ENCODE measurements at regions of chr2 and their contacts with region 1.

Region 1: GRCh38 chr2:177332041-177332991 is 60.3 kb upstream of the AGPS start:
- DNase-seq: no peak
- H3K4me3 ChIP-seq: no peak overlapping the region
- CTCF ChIP-seq: peak; percentile 50

Region 2: GRCh38 chr2:177106212-177106611 is 226.1 kb before region 1 on chr2:
- CTCF ChIA-PET with region 1: no interaction called
- POLR2A ChIA-PET with region 1: no interaction called
- DNase-seq: no peak
- H3K4me3 ChIP-seq: no peak overlapping the region
- CTCF ChIP-seq: no peak

Region 3: GRCh38 chr2:177263451-177264208 is 68.7 kb before region 1 on chr2:
- CTCF ChIA-PET with region 1: interaction called, 17 read pairs
- POLR2A ChIA-PET with region 1: interaction called, 3 read pairs
- DNase-seq: peak; percentile 89
- H3K4me3 ChIP-seq: peak overlapping the region; percentile 76
- CTCF ChIP-seq: peak; percentile 98

Region 4: DNA sequence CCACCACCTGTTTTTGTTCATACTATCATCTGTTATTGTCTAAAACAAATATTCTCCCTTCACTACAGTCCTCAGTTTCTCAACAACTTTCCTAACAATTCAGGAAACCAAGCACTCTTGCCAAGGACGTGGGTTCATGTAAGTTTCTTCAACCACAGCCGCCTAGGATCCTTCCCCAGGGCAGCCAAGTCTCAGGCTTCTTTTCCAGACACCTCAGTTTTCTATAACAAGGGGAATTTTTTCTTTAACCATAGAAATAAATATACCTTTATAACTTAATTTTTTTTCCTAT is 20.8 kb after region 1 on chr2:
- CTCF ChIA-PET with region 1: interaction called, 14 read pairs
- POLR2A ChIA-PET with region 1: interaction called, 4 read pairs
- DNase-seq: no peak
- H3K4me3 ChIP-seq: no peak overlapping the region
- CTCF ChIP-seq: no peak

Region 5: DNA sequence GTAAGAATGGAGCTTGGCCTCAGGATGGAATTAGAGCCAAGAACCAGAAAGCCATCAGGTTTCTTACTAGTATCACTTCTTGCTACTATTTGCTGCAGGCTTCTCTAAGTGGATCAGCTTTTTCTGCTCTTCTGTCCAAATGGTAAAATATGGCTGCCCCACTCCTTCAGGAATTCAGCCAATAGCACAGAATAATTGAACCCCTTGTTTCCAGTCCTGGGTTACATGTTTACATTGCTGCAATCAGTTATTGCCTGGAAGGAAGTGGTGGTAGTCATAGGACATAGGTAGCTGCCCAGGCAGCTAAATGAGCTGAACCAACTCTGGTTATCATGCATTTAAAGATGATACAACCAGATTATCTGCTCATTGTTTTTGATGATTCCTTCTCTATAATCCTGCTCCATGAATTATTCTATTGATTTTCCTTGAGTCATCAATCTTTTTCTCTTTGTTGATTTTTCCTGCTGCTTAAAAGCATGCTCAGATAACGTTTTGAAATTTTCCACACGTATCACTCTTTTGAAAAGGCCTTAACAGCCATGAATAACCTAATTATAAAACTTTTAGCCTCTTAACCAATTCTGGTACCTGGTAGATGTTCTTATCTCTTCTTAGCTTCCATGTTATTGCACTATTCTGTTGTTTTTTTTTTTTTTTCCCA is 72.8 kb after region 1 on chr2:
- CTCF ChIA-PET with region 1: interaction called, 21 read pairs
- POLR2A ChIA-PET with region 1: no interaction called
- DNase-seq: no peak
- H3K4me3 ChIP-seq: no peak overlapping the region
- CTCF ChIP-seq: no peak

Region 6: GRCh38 chr2:177604271-177605065 is 272.2 kb after region 1 on chr2:
- CTCF ChIA-PET with region 1: interaction called, 28 read pairs
- POLR2A ChIA-PET with region 1: no interaction called
- DNase-seq: peak; percentile 38
- H3K4me3 ChIP-seq: peak overlapping the region; percentile 25
- CTCF ChIP-seq: peak; percentile 74

Region 7: DNA sequence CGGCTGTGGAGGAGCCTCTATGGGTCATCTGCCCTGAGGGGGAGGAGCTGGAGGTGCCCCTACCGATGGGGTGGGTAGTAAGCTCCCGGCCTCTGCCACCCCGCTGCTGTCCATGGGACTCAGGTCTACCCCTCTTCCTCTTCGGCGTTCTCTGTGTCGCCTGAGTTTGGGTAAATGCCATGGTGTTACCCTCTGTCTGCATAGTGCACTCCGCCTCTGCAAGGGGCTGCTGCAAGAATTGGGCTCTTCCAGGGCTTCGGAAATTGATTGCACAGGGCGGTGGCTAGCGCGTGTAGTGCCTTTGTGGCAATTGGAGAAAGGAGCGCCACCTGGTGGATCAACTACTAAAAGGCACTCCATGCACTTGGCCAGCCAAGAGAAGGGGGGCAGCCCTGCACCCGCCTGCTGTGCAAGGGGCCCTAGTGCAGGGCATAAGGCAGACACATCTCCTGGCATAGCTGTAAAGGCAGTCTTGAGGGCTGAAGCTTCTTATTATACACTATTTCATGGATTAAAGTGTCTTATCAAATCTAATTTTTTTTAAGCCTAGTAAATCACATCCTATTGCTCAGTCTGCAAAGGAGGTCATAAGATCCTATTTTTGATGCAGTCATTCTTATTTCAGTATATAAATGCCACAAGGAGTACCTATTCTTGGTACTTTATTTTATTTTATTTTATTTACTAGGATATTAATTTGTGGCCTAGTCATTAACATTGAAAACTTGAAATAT is 431.4 kb after region 1 on chr2:
- CTCF ChIA-PET with region 1: interaction called, 51 read pairs
- POLR2A ChIA-PET with region 1: no interaction called
- DNase-seq: no peak
- H3K4me3 ChIP-seq: no peak overlapping the region
- CTCF ChIP-seq: peak; percentile 88